B cell (primary cell): ENCODE measurements at regions of chr13 and their contacts with region 1.

Region 1: DNA sequence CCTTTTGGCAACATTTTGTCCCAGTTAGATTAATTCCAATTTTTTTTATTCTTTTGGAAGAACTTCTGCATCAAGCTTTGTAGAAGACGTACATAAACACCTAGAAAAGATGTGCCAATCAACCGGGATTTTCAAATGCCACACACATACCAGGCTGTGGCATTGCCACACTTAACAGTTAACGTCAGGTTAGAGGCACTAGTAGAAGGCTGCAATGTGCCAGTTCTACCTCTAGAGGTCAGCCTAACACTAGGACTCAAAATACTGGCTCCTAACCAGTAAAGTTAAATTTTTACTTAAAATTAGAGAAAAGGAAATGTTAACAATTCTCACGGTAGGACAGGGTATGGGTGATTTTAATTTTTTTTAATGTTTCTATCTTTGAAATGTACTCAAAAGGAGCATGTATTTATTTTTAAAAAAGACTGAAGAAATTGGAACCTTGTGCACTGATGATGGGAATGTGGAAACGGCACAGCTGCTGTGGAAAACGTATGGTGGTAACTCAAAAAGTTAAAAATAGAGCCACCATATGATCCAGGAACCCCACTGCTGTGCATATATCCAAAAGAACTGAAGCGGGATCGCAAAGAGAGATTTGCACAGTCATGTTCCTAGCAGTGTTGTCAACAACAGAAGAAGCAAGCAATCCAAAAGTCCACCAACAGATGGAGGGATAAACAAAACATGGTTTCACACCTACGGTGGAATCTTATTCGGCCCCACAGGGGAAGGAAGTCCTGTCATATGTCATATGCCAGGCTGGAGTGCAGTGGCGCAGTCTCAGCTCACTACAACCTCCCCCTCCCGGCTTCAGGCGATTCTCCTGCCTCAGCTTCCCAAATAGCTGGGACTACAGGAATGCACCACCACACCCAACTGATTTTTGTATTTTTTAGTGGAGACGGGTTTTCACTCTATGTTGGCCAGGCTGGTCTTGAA is 30.3 kb downstream of the CRYL1 start:
- DNase-seq: peak; percentile 76
- ATAC-seq: peak; percentile 88
- H3K4me3 ChIP-seq: no peak overlapping the region
- H3K4me3 Mint-ChIP-seq: no peak overlapping the region
- H3K27ac ChIP-seq: no peak overlapping the region
- H3K27ac Mint-ChIP-seq: no peak overlapping the region
- H3K4me1 ChIP-seq: peaks cover 4 to 5% of the 10 kb centered on the region in 2 donors
- H3K4me1 Mint-ChIP-seq: no peaks in the 10 kb centered on the region
- H3K27me3 ChIP-seq: no peaks in the 10 kb centered on the region
- H3K27me3 Mint-ChIP-seq: no peaks in the 10 kb centered on the region
- CTCF ChIP-seq: peak; percentile 98

Region 2: DNA sequence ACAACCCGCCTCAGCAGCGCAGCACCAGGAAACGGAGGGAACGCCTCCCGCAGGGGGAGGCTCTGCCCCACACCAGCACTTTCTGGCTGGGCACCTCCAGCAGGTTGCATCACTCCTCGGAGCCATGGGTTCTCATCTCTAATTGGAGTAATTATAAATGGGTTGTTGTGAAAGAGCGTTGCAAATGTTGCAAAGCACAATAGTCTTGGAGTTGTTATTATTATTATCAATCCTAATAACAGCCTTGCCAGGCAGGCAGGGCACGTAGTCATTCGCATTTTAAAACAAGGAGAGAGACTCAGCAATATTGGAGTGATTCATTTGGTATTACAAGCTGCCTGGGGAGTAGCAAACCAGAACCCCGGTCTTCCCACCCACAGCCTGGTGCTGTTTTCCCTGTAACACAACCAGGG is 154.6 kb before region 1 on chr13:
- CTCF ChIA-PET with region 1: no interaction called
- POLR2A ChIA-PET with region 1: no interaction called
- intact Hi-C with region 1: no loop called
- DNase-seq: no peak
- ATAC-seq: no peak
- H3K4me3 ChIP-seq: no peak overlapping the region
- H3K4me3 Mint-ChIP-seq: no peak overlapping the region
- H3K27ac ChIP-seq: no peak overlapping the region
- H3K27ac Mint-ChIP-seq: no peak overlapping the region
- H3K4me1 ChIP-seq: no peaks in the 10 kb centered on the region
- H3K4me1 Mint-ChIP-seq: no peaks in the 10 kb centered on the region
- H3K27me3 ChIP-seq: no peaks in the 10 kb centered on the region
- H3K27me3 Mint-ChIP-seq: peaks cover 6% of the 10 kb centered on the region
- CTCF ChIP-seq: no peak

Region 3: DNA sequence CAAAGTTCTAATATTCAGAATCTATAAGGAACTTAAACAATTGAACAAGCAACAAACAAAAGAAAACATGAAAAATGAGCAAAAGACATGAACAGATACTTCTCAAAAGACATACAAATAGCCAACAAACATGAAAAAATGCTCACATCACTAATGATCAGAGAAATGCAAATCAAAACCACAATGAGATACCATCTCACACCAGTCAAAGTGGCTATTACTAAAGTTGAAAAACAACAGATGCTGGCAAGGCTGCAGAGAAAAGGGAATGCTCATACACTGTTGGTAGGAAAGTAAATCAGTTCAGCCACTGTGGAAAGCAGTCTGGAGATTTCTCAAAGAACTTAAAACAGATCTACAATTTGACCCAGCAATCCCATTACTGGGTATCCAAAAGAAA is 44.0 kb before region 1 on chr13:
- CTCF ChIA-PET with region 1: no interaction called
- POLR2A ChIA-PET with region 1: no interaction called
- intact Hi-C with region 1: no loop called
- DNase-seq: no peak
- ATAC-seq: no peak
- H3K4me3 ChIP-seq: no peak overlapping the region
- H3K4me3 Mint-ChIP-seq: no peak overlapping the region
- H3K27ac ChIP-seq: no peak overlapping the region
- H3K27ac Mint-ChIP-seq: no peak overlapping the region
- H3K4me1 ChIP-seq: peaks cover 0 to 6% of the 10 kb centered on the region in 2 donors
- H3K4me1 Mint-ChIP-seq: peaks cover 10% of the 10 kb centered on the region
- H3K27me3 ChIP-seq: no peaks in the 10 kb centered on the region
- H3K27me3 Mint-ChIP-seq: no peaks in the 10 kb centered on the region
- CTCF ChIP-seq: no peak

Region 4: GRCh38 chr13:20465218-20465879 is 30.0 kb before region 1 on chr13:
- CTCF ChIA-PET with region 1: no interaction called
- POLR2A ChIA-PET with region 1: no interaction called
- intact Hi-C with region 1: no loop called
- DNase-seq: no peak
- ATAC-seq: no peak
- H3K4me3 ChIP-seq: no peak overlapping the region
- H3K4me3 Mint-ChIP-seq: no peak overlapping the region
- H3K27ac ChIP-seq: no peak overlapping the region
- H3K27ac Mint-ChIP-seq: no peak overlapping the region
- H3K4me1 ChIP-seq: no peaks in the 10 kb centered on the region
- H3K4me1 Mint-ChIP-seq: no peaks in the 10 kb centered on the region
- H3K27me3 ChIP-seq: no peaks in the 10 kb centered on the region
- H3K27me3 Mint-ChIP-seq: no peaks in the 10 kb centered on the region
- CTCF ChIP-seq: no peak

Region 5: GRCh38 chr13:20546556-20546955 is 51.2 kb after region 1 on chr13:
- CTCF ChIA-PET with region 1: interaction called, 10 read pairs
- POLR2A ChIA-PET with region 1: no interaction called
- intact Hi-C with region 1: no loop called
- DNase-seq: peak; percentile 61
- ATAC-seq: peak; percentile 70
- H3K4me3 ChIP-seq: peak overlapping the region in 1 of 5 experiments; percentile 14
- H3K4me3 Mint-ChIP-seq: peak overlapping the region; percentile 42
- H3K27ac ChIP-seq: peak overlapping the region in 1 of 2 donors; percentile 64
- H3K27ac Mint-ChIP-seq: peak overlapping the region; percentile 62
- H3K4me1 ChIP-seq: peaks cover 37 to 46% of the 10 kb centered on the region in 2 donors
- H3K4me1 Mint-ChIP-seq: peaks cover 38% of the 10 kb centered on the region
- H3K27me3 ChIP-seq: no peaks in the 10 kb centered on the region
- H3K27me3 Mint-ChIP-seq: no peaks in the 10 kb centered on the region
- CTCF ChIP-seq: no peak

Region 6: GRCh38 chr13:20703780-20704445 is 208.6 kb after region 1 on chr13:
- CTCF ChIA-PET with region 1: interaction called, 6 read pairs
- POLR2A ChIA-PET with region 1: no interaction called
- intact Hi-C with region 1: loop called (anchors 2 kb)
- DNase-seq: peak; percentile 88
- ATAC-seq: peak; percentile 88
- H3K4me3 ChIP-seq: peak overlapping the region in 3 of 5 experiments; percentile 15 to 40 (median 29)
- H3K4me3 Mint-ChIP-seq: peak overlapping the region; percentile 52
- H3K27ac ChIP-seq: no peak overlapping the region
- H3K27ac Mint-ChIP-seq: no peak overlapping the region
- H3K4me1 ChIP-seq: peaks cover 11 to 12% of the 10 kb centered on the region in 2 donors
- H3K4me1 Mint-ChIP-seq: peaks cover 12% of the 10 kb centered on the region
- H3K27me3 ChIP-seq: peaks cover 0 to 27% (median 18%) of the 10 kb centered on the region in 4 experiments
- H3K27me3 Mint-ChIP-seq: peaks cover 16% of the 10 kb centered on the region
- CTCF ChIP-seq: peak; percentile 43

Region 7: GRCh38 chr13:20822406-20822805 is 327.1 kb after region 1 on chr13:
- CTCF ChIA-PET with region 1: interaction called, 153 read pairs
- POLR2A ChIA-PET with region 1: no interaction called
- intact Hi-C with region 1: no loop called
- DNase-seq: no peak
- ATAC-seq: no peak
- H3K4me3 ChIP-seq: no peak overlapping the region
- H3K4me3 Mint-ChIP-seq: no peak overlapping the region
- H3K27ac ChIP-seq: no peak overlapping the region
- H3K27ac Mint-ChIP-seq: no peak overlapping the region
- H3K4me1 ChIP-seq: no peaks in the 10 kb centered on the region
- H3K4me1 Mint-ChIP-seq: peaks cover 4% of the 10 kb centered on the region
- H3K27me3 ChIP-seq: no peaks in the 10 kb centered on the region
- H3K27me3 Mint-ChIP-seq: no peaks in the 10 kb centered on the region
- CTCF ChIP-seq: no peak

Region 8: GRCh38 chr13:20924758-20925394 is 429.5 kb after region 1 on chr13:
- CTCF ChIA-PET with region 1: interaction called, 118 read pairs
- POLR2A ChIA-PET with region 1: interaction called, 3 read pairs
- intact Hi-C with region 1: loop called (anchors 1 kb)
- DNase-seq: peak; percentile 68
- ATAC-seq: no peak
- H3K4me3 ChIP-seq: no peak overlapping the region
- H3K4me3 Mint-ChIP-seq: no peak overlapping the region
- H3K27ac ChIP-seq: no peak overlapping the region
- H3K27ac Mint-ChIP-seq: no peak overlapping the region
- H3K4me1 ChIP-seq: no peaks in the 10 kb centered on the region
- H3K4me1 Mint-ChIP-seq: no peaks in the 10 kb centered on the region
- H3K27me3 ChIP-seq: no peaks in the 10 kb centered on the region
- H3K27me3 Mint-ChIP-seq: no peaks in the 10 kb centered on the region
- CTCF ChIP-seq: peak; percentile 90